ENCODE measurements at regions of chr9 and their contacts with region 1.

Region 1: DNA sequence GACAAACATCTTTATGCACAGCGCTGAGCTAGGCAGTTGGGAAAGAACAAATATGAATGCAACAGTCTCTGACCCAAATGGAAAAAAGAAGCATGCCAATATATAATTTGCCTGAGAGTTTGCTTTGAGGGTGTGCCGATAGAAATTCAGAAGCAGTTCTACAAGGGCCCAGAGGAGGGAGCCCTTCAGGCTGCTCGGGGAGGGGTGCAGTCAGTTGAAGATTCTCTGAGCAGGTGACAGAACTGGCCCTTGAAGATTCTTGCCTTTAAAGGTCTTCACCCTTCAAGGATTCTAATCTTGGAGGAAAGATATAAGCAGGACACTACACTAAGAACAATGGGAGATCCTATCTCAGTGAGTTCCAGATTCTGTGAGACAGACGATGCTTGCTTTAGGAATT is 3.7 kb upstream of the PAPPA start:
- DNase-seq: peak; percentile 48
- CTCF ChIP-seq: peak; percentile 47

Region 2: GRCh38 chr9:116661037-116661954 is 511.5 kb after region 1 on chr9:
- in situ Hi-C with region 1: loop called (anchors 25 kb)
- DNase-seq: peak; percentile 53
- CTCF ChIP-seq: peak; percentile 73